Left cardiac atrium (tissue), 4 donors: ENCODE measurements at regions of chrX and their contacts with region 1.

Region 1: GRCh38 chrX:11533211-11533651 is 132.5 kb downstream of the ARHGAP6 start:
- DNase-seq: no peak
- ATAC-seq: peak; percentile 87 to 89

Region 2: DNA sequence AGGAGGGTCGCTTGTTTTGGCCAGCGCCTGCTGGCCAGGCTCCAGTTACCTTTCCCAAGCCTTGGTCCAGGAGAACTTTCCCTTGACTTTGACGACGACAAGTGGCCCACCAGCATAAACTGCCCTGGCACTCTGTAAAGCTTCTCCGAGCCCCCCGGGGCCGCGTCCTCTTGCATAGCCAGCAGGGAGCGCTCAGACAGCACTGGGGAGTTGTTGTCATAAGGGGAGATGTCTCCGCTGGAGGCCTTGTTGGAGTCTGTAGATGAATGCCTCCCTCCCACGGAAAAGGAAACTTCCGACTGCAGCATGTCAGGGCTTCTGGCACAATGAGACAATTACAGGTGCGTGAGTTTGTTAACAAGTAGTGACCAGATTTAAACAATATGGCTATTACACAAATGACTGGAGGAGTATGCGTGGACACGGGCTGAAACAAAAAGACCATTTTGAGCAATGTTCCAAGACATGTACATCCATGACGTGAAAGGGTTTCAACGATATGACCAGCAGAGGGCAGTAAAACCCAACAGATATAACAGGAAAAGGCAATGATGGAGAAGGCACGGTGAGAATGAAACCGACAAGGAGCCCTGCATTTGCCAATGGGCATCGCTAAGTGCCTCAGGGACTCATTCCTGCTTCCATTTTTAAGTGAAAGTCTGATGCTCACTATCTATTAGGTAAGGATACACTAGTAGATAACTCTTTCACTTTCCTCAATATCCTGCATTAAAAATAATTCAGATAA is 389.1 kb before region 1 on chrX:
- intact Hi-C with region 1: loop called in 1 of 2 experiments (anchors 5 kb)
- DNase-seq: peak; percentile 34
- ATAC-seq: peak; percentile 73 to 80

Region 3: GRCh38 chrX:11724122-11725017 is 191.1 kb after region 1 on chrX:
- intact Hi-C with region 1: loop called in 1 of 2 experiments (anchors 2 kb)
- DNase-seq: no peak
- ATAC-seq: peak in 1 of 2 donors; percentile 24

Region 4: GRCh38 chrX:11758400-11759171 is 225.4 kb after region 1 on chrX:
- intact Hi-C with region 1: no loop called
- DNase-seq: peak; percentile 90
- ATAC-seq: peak; percentile 87 to 91

Region 5: DNA sequence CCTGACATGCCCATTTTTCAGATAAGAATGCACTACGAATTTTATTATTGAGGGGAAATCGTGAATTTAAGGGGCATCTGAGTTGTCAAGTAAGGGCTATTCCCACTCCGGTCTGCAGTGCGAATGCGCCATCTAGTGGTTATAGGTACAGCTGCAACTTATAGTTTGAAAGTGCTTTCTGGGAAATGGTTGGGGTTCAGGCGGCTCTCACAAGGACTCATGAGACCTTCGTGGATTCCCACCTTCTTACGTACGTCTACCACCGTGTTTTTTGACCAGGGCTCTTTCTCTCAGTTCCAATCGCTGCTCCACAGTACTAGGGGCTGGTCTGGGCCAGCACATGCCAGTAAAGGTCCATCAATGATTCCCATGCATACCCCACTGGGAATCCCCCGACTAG is 237.1 kb after region 1 on chrX:
- intact Hi-C with region 1: loop called in 1 of 2 experiments (anchors 2 kb)
- DNase-seq: no peak
- ATAC-seq: peak in 1 of 2 donors; percentile 69